PC-3 (cell line): ENCODE measurements at regions of chr5 and their contacts with region 1.

Region 1: DNA sequence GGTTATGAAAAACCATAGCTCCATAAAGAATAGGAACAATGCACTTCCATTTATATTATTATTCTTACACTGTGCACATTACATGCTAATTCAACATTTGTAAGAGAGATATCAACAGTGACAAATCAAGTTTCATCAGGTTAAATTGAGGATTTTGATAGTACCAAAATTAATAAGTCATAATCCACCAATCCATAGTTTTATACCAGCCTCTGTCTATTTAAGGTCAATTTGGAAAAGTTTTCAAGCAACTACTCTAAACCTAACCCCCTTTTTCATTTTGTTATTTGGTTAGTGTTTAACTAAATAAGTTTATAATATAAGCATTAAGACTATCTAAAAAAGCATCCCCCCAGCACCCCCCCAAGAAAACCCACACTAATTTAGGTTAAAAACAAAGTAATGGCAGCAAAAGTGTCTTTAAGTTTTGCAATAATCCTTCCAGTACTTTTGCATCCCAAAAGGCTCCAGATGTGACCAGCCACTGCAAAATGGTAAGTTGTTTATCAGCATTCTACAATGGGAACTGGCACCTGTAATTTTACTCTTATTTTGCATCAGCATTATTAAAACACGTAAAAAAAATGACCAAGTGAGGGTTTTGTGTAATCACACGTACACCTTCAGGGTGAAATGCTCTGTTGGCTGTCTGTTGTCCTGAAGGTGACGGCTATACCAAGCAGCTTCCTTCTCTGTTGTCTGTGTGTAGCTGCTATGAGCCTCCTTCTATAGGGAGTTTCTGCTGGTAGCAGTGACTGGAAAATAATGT is 36.8 kb upstream of the SSBP2 start:
- DNase-seq: no peak
- ATAC-seq: no peak
- H3K4me3 ChIP-seq: no peak overlapping the region
- H3K27ac ChIP-seq: no peak overlapping the region
- H3K4me1 ChIP-seq: no peaks in the 10 kb centered on the region
- H3K27me3 ChIP-seq: no peaks in the 10 kb centered on the region
- CTCF ChIP-seq: no peak

Region 2: GRCh38 chr5:81525690-81526089 is 262.0 kb before region 1 on chr5:
- CTCF ChIA-PET with region 1: no interaction called
- POLR2A ChIA-PET with region 1: no interaction called
- intact Hi-C with region 1: no loop called
- DNase-seq: peak; percentile 31
- ATAC-seq: peak; percentile 33; the same call in 1 of the 2 replicates
- H3K4me3 ChIP-seq: no peak overlapping the region
- H3K27ac ChIP-seq: peak overlapping the region; percentile 61
- H3K4me1 ChIP-seq: peaks cover 5% of the 10 kb centered on the region; the same call in 1 of the 2 replicates
- H3K27me3 ChIP-seq: no peaks in the 10 kb centered on the region
- CTCF ChIP-seq: no peak

Region 3: GRCh38 chr5:81751009-81751835 is 36.4 kb before region 1 on chr5 and contains the start of gene SSBP2:
- CTCF ChIA-PET with region 1: no interaction called
- POLR2A ChIA-PET with region 1: no interaction called
- intact Hi-C with region 1: no loop called
- DNase-seq: peak; percentile 96
- ATAC-seq: peak; percentile 88
- H3K4me3 ChIP-seq: peak within 1 kb of the TSS; percentile 81
- H3K27ac ChIP-seq: peak within 1 kb of the TSS; percentile 65
- H3K4me1 ChIP-seq: peaks cover 18% of the 10 kb centered on the region
- H3K27me3 ChIP-seq: peaks cover 14% of the 10 kb centered on the region; the same call in 1 of the 2 replicates
- CTCF ChIP-seq: no peak
- total RNA-seq, gene SSBP2: 5.8 and 9.0 TPM in 2 replicates

Region 4: DNA sequence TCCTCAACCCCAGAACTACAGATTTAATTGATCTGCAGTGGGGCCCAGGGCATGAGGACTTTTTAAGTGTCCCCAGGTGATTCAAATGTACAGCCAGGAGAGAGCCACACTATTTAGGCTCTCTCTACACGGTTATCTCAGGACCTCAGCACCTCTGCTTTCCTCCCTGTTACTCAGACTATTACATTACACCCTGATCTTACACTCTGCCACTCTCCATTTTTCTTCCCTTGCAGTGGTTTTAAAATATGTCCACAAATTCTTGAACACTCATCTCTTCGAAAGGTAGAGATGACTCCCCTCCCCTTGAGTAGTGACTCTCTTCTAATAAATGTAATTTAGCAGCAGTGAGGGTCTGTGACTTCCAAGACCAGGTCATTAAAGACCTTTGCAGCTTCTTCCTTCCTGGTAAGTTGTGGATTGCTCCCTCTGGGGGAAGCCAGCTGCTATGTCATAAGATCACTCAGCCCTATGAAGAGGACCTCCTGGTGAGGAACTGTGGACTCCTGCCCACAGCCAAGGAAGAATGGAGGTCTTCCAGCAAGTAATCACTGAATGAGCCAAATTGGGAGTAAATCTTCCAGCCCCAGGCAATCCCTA is 50.7 kb after region 1 on chr5:
- CTCF ChIA-PET with region 1: interaction called, 4 read pairs
- POLR2A ChIA-PET with region 1: no interaction called
- intact Hi-C with region 1: loop called (anchors 5 kb)
- DNase-seq: peak; percentile 49
- ATAC-seq: peak; percentile 82
- H3K4me3 ChIP-seq: no peak overlapping the region
- H3K27ac ChIP-seq: no peak overlapping the region
- H3K4me1 ChIP-seq: peaks cover 11% of the 10 kb centered on the region
- H3K27me3 ChIP-seq: no peaks in the 10 kb centered on the region
- CTCF ChIP-seq: peak; percentile 68

Region 5: DNA sequence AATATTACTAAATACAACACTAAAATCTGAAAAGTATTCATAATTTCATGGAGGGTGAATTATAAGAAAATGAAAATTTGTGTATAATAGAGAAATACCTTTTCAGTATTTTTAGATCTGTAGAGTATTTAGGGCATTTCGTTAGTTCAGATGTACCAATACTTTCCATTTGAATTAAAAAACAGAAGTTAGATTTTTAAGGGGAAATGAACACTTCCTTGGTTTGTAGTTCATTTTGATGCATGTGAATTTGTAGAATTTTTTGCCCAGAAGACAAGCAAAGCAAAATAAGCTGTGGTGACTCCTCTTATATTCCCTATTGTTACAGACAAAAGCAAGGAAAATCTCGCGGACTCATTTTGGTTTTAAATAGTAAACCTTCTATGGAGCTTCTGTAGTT is 699.5 kb after region 1 on chr5:
- CTCF ChIA-PET with region 1: no interaction called
- POLR2A ChIA-PET with region 1: no interaction called
- intact Hi-C with region 1: no loop called
- DNase-seq: no peak
- ATAC-seq: no peak
- H3K4me3 ChIP-seq: no peak overlapping the region
- H3K27ac ChIP-seq: no peak overlapping the region
- H3K4me1 ChIP-seq: no peaks in the 10 kb centered on the region
- H3K27me3 ChIP-seq: no peaks in the 10 kb centered on the region
- CTCF ChIP-seq: no peak